ACHN (cell line): ENCODE measurements at regions of chr5 and their contacts with region 1.

Region 1: GRCh38 chr5:147453875-147454814 is 55.7 kb downstream of the DPYSL3 start:
- DNase-seq: peak; percentile 77

Region 2: DNA sequence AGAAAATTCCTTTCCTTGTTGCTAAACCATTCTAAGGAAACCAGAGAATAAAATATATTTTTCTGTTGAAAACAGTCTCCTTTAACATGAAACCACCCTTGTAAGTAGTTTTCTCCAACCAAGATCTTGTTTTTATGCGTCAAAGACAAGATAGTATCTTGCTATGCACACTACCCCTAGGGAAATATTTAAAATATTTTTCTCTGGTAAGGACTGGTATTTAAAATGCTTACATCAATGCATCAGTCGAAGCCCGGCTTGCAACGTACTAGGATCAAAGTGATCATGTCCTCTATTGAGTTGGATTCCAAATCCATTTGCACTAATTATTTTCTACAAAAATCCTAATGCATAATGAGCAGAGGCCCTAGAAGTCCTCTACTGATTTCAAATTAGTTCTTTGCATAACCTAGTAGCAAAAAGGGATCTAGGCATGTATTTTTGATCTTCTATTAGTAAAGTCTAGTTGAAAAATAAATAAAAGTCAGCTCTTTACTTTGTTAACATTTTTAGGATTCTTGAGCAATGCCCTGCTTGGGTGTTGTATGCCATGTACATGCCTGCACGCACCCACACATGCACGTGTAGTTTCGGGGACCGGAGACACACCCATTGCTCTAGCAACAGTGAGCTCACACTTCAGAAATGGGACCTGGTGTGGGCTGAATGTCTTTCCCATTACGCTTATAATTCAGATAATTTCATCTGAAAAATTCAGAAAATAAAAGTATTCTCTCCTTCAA is 773.1 kb before region 1 on chr5:
- in situ Hi-C with region 1: no loop called
- DNase-seq: no peak

Region 3: DNA sequence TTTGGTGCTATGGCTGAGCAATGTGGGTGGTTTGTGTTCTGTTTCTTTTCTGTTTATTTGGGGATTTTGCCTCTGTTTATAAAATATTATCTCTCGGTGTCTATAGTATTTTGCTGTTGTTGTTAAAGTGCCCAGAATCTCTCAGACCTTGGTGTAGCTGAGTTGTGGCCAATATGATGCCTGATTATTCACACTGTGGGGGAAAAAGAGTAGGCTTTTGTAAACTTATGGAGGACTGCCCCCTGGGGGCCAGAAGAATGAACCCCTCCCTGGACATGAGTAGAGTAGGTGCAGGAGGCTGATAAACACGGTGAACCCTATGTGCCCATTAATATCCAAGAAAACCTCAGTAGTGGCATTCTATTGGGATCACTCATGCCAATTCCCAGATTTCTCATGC is 104.7 kb after region 1 on chr5:
- in situ Hi-C with region 1: loop called (anchors 25 kb)
- DNase-seq: peak; percentile 54